Psoas muscle (tissue), 8 donors: ENCODE measurements at regions of chr1 and their contacts with region 1.

Region 1: GRCh38 chr1:110513511-110513910 is 5.5 kb downstream of the KCNA10 start:
- DNase-seq: no peak
- ATAC-seq: no peak
- H3K4me3 ChIP-seq: no peak overlapping the region
- H3K27ac ChIP-seq: no peak overlapping the region
- H3K4me1 ChIP-seq: no peaks in the 10 kb centered on the region
- H3K27me3 ChIP-seq: no peaks in the 10 kb centered on the region
- CTCF ChIP-seq: no peak

Region 2: DNA sequence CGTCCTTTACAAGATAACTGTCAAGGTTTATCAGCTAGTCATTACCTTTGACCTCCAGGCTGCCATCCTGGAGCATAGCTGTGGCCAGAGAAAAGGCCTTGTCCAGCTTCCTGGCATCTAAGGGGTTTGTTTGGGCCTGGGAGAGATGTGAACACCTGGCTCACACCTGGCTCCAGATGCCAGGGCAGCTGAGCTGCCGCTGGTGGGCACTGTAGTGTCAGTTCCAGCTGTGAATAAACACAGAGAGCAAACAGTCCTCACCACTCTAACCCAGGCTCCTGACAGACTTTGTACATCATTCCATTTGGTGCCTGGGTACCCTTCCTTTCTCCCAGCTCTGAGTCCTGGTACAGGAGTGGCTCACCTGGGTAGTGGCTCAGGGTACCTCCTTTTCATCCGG is 19.7 kb after region 1 on chr1:
- intact Hi-C with region 1: loop called in 1 of 2 experiments (anchors 2 kb)
- DNase-seq: no peak
- ATAC-seq: no peak
- H3K4me3 ChIP-seq: no peak overlapping the region
- H3K27ac ChIP-seq: no peak overlapping the region
- H3K4me1 ChIP-seq: no peaks in the 10 kb centered on the region
- H3K27me3 ChIP-seq: peaks cover 0 to 22% (median 2%) of the 10 kb centered on the region in 3 donors
- CTCF ChIP-seq: no peak